Ascending aorta (tissue), 2 donors: ENCODE measurements at regions of chr20 and their contacts with region 1.

Region 1: GRCh38 chr20:45833883-45834796 is 541 bp downstream of the SNX21 start:
- DNase-seq: peak in 1 of 2 donors; percentile 82
- H3K4me3 ChIP-seq: peak overlapping the region; percentile 60 to 92
- H3K27ac ChIP-seq: peak overlapping the region; percentile 96 to 97
- H3K4me1 ChIP-seq: peaks cover 23 to 32% of the 10 kb centered on the region in 2 donors
- H3K27me3 ChIP-seq: no peaks in the 10 kb centered on the region
- CTCF ChIP-seq: no peak

Region 2: GRCh38 chr20:45798935-45799642 is 35.1 kb before region 1 on chr20:
- intact Hi-C with region 1: loop called (anchors 1 kb)
- DNase-seq: peak in 1 of 2 donors; percentile 82
- H3K4me3 ChIP-seq: no peak overlapping the region
- H3K27ac ChIP-seq: peak overlapping the region; percentile 44 to 51
- H3K4me1 ChIP-seq: no peaks in the 10 kb centered on the region
- H3K27me3 ChIP-seq: no peaks in the 10 kb centered on the region
- CTCF ChIP-seq: peak; percentile 70 to 77 (median 75)

Region 3: DNA sequence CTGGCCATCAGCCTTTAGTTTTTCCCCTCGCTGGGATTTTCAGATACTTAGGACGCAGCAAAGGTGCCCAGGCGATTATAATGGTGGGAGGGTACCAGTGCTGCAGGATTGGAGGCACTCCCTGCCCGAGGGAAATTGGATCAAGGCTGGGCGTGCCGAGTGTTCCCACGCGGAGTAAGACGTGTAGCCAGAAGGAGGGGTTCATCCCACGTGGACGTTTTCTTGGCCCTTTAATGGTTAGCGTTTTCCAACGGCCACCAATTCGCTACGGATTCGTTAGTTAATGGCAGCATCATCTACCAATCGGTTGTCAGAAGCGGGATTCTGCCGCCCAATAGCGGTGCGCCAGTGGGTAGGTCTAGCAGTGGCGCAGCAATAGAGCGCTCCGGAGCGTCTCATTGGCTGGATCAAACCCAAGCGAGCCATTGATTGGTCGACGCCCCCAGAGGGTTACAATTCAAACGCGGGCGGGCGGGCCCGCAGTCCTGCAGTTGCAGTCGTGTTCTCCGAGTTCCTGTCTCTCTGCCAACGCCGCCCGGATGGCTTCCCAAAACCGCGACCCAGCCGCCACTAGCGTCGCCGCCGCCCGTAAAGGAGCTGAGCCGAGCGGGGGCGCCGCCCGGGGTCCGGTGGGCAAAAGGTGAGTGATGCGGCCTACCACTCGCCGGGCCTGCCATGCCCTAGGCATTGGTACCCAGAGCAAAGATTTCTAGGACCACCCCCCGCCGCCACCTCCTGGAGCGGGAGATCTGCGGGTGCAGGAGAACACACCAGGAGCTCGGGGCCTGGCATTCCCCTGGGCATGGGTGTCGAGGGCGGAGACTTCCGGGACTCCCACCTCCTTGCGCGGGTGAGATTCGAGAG is 21.8 kb before region 1 on chr20 and contains the start of gene UBE2C:
- intact Hi-C with region 1: loop called (anchors 1 kb)
- DNase-seq: peak; percentile 95 to 99
- H3K4me3 ChIP-seq: peak within 1 kb of the TSS; percentile 56 to 80
- H3K27ac ChIP-seq: peak within 1 kb of the TSS; percentile 16 to 45
- H3K4me1 ChIP-seq: peaks cover 9% of the 10 kb centered on the region in 2 donors
- H3K27me3 ChIP-seq: no peaks in the 10 kb centered on the region
- CTCF ChIP-seq: no peak
- total RNA-seq, gene UBE2C: not detected

Region 4: GRCh38 chr20:45880988-45881788 is 47.0 kb after region 1 on chr20 and contains the start of gene ZSWIM1:
- intact Hi-C with region 1: loop called (anchors 1 kb)
- DNase-seq: peak; percentile 99 to 100
- H3K4me3 ChIP-seq: peak within 1 kb of the TSS; percentile 67 to 71
- H3K27ac ChIP-seq: peak within 1 kb of the TSS; percentile 83 to 88
- H3K4me1 ChIP-seq: peaks cover 0 to 14% of the 10 kb centered on the region in 2 donors
- H3K27me3 ChIP-seq: no peaks in the 10 kb centered on the region
- CTCF ChIP-seq: no peak
- total RNA-seq, gene ZSWIM1: 3.5 TPM

Region 5: GRCh38 chr20:45890985-45891983 is 57.1 kb after region 1 on chr20 and contains the starts of genes CTSA and NEURL2:
- intact Hi-C with region 1: loop called (anchors 2 kb)
- DNase-seq: peak; percentile 76 to 96
- H3K4me3 ChIP-seq: peak within 1 kb of the TSS; percentile 71 to 87
- H3K27ac ChIP-seq: peak within 1 kb of the TSS; percentile 68 to 71
- H3K4me1 ChIP-seq: peaks cover 8 to 12% of the 10 kb centered on the region in 2 donors
- H3K27me3 ChIP-seq: no peaks in the 10 kb centered on the region
- CTCF ChIP-seq: no peak
- total RNA-seq, gene CTSA: 82.0 TPM
- total RNA-seq, gene NEURL2: 4.0 TPM